ENCODE measurements at regions of chr5 and their contacts with region 1.

Region 1: GRCh38 chr5:170832254-170832653 is 29.6 kb upstream of the RANBP17 start:
- DNase-seq: no peak
- H3K4me3 ChIP-seq: no peak overlapping the region
- CTCF ChIP-seq: no peak

Region 2: GRCh38 chr5:171031977-171032376 is 199.7 kb after region 1 on chr5:
- in situ Hi-C with region 1: loop called (anchors 10 kb)
- DNase-seq: no peak
- H3K4me3 ChIP-seq: no peak overlapping the region
- CTCF ChIP-seq: no peak

Measured in astrocyte of the cerebellum (primary cell).